CD4-positive, alpha-beta T cell (primary cell): ENCODE measurements at regions of chr14 and their contacts with region 1.

Region 1: GRCh38 chr14:92585981-92586937 is 72.7 kb downstream of the RIN3 start:
- DNase-seq: peak in 5 of 14 experiments; percentile 29 to 89 (median 74)
- ATAC-seq: peak; percentile 84
- H3K4me3 ChIP-seq: peak overlapping the region; percentile 8
- H3K4me3 Mint-ChIP-seq: peak overlapping the region; percentile 73
- H3K27ac ChIP-seq: peak overlapping the region; percentile 58 to 84
- H3K27ac Mint-ChIP-seq: peak overlapping the region; percentile 90
- H3K4me1 ChIP-seq: peaks cover 89% of the 10 kb centered on the region
- H3K4me1 Mint-ChIP-seq: peaks cover 96% of the 10 kb centered on the region
- H3K27me3 ChIP-seq: no peaks in the 10 kb centered on the region
- H3K27me3 Mint-ChIP-seq: no peaks in the 10 kb centered on the region
- CTCF ChIP-seq: no peak

Region 2: DNA sequence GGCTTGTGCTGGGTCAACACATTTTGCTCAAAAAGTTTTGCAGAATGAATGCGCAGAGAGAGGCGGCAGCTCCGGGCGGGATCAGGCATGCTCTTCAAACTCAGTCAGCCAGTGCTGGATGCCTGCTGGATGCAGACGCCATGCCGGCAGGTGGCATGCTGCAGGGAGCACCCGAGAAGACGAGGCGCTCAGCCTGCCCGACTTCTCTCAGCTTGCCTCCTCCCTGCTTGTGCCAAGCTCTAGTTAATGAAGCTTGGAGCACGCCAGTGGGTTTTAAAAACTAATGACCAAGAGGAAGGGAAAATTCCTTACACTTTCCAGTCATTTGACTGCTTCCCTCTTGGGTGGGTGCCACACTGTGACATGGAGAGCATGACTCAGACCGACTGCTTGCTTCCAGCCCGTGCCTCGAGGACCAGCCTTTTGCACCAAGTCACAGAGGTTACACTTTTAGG is 223.5 kb before region 1 on chr14:
- CTCF ChIA-PET with region 1: no interaction called
- POLR2A ChIA-PET with region 1: no interaction called
- intact Hi-C with region 1: no loop called
- DNase-seq: no peak
- ATAC-seq: no peak
- H3K4me3 ChIP-seq: no peak overlapping the region
- H3K4me3 Mint-ChIP-seq: no peak overlapping the region
- H3K27ac ChIP-seq: no peak overlapping the region
- H3K27ac Mint-ChIP-seq: no peak overlapping the region
- H3K4me1 ChIP-seq: no peaks in the 10 kb centered on the region
- H3K4me1 Mint-ChIP-seq: no peaks in the 10 kb centered on the region
- H3K27me3 ChIP-seq: peaks cover 0 to 7% of the 10 kb centered on the region in 2 experiments
- H3K27me3 Mint-ChIP-seq: peaks cover 22% of the 10 kb centered on the region
- CTCF ChIP-seq: no peak

Region 3: DNA sequence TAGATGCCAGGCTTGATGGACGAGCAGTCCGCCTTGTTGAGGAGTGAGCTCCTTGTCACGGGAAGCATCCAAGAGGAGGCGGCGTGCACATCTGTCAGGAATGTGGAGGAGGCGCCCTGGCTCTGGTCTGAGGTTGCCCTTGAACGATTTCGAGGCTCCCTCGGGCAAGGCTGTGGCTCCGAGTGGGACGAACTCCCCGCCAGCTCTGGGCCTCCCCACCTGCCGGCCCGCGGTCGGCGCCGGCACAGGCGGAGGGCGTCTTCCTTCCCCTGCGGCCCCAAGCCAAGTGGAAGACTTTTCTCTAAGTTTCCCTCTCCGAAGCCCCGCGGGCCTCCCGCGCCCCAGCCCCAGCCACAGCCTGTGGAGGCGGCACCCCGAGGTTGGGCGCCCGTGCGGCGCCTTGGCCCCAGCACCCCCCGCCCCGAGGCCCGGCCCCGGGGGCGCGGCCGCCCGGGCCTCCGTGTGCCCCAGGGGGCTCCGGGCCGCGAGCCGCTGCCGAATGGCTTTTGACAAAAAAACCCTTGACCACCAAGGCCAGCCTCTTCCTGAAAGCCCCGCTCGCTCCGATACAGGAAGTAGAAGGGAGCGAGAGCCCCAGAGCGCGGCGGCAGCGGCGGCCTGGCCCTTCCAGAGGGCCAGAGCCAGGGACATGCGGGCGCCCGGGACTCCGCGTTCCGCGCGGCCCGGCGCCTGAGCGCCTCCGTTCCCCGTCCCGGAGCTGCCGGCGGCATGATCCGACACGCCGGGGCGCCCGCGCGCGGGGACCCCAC is 72.9 kb before region 1 on chr14 and contains the start of gene RIN3:
- CTCF ChIA-PET with region 1: no interaction called
- POLR2A ChIA-PET with region 1: no interaction called
- intact Hi-C with region 1: loop called in 1 of 2 experiments (anchors 5 kb)
- DNase-seq: peak in 11 of 14 experiments; percentile 19 to 69 (median 29)
- ATAC-seq: peak; percentile 57
- H3K4me3 ChIP-seq: peak within 1 kb of the TSS; percentile 82
- H3K4me3 Mint-ChIP-seq: peak within 1 kb of the TSS; percentile 78
- H3K27ac ChIP-seq: peak within 1 kb of the TSS in 1 of 2 donors; percentile 21
- H3K27ac Mint-ChIP-seq: peak within 1 kb of the TSS; percentile 2
- H3K4me1 ChIP-seq: peaks cover 50% of the 10 kb centered on the region
- H3K4me1 Mint-ChIP-seq: peaks cover 41% of the 10 kb centered on the region
- H3K27me3 ChIP-seq: no peaks in the 10 kb centered on the region
- H3K27me3 Mint-ChIP-seq: no peaks in the 10 kb centered on the region
- CTCF ChIP-seq: no peak
- total RNA-seq, gene RIN3: 67.9 to 72.2 TPM

Region 4: GRCh38 chr14:92540472-92541053 is 45.7 kb before region 1 on chr14:
- CTCF ChIA-PET with region 1: no interaction called
- POLR2A ChIA-PET with region 1: interaction called, 28 read pairs
- intact Hi-C with region 1: loop called in 1 of 2 experiments (anchors 5 kb)
- DNase-seq: no peak
- ATAC-seq: no peak
- H3K4me3 ChIP-seq: no peak overlapping the region
- H3K4me3 Mint-ChIP-seq: peak overlapping the region; percentile 35
- H3K27ac ChIP-seq: no peak overlapping the region
- H3K27ac Mint-ChIP-seq: peak overlapping the region; percentile 50
- H3K4me1 ChIP-seq: peaks cover 34% of the 10 kb centered on the region
- H3K4me1 Mint-ChIP-seq: peaks cover 59% of the 10 kb centered on the region
- H3K27me3 ChIP-seq: no peaks in the 10 kb centered on the region
- H3K27me3 Mint-ChIP-seq: no peaks in the 10 kb centered on the region
- CTCF ChIP-seq: no peak

Region 5: DNA sequence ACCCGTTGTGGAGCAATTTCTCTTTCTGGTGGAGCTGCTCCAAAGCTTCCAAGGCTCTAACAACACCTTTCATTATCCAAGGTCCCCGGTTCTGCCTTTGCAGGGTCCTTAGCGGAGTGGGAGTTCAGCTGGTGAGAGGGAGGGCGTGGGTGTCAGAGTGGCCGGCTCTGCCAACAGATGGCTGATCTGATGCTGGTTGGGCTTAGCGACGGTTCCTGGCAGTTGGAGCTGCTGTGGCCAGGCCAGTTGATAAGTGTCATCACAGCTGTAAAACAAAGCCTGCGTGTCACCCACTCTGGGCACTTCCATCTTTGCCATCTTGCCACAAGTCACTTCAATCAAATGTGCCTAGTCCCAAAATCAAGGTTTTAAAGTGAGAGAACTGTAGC is 36.4 kb before region 1 on chr14:
- CTCF ChIA-PET with region 1: interaction called, 4 read pairs
- POLR2A ChIA-PET with region 1: interaction called, 28 read pairs
- intact Hi-C with region 1: loop called in 1 of 2 experiments (anchors 2 kb)
- DNase-seq: no peak
- ATAC-seq: no peak
- H3K4me3 ChIP-seq: no peak overlapping the region
- H3K4me3 Mint-ChIP-seq: no peak overlapping the region
- H3K27ac ChIP-seq: no peak overlapping the region
- H3K27ac Mint-ChIP-seq: no peak overlapping the region
- H3K4me1 ChIP-seq: peaks cover 13% of the 10 kb centered on the region
- H3K4me1 Mint-ChIP-seq: peaks cover 35% of the 10 kb centered on the region
- H3K27me3 ChIP-seq: no peaks in the 10 kb centered on the region
- H3K27me3 Mint-ChIP-seq: no peaks in the 10 kb centered on the region
- CTCF ChIP-seq: no peak

Region 6: DNA sequence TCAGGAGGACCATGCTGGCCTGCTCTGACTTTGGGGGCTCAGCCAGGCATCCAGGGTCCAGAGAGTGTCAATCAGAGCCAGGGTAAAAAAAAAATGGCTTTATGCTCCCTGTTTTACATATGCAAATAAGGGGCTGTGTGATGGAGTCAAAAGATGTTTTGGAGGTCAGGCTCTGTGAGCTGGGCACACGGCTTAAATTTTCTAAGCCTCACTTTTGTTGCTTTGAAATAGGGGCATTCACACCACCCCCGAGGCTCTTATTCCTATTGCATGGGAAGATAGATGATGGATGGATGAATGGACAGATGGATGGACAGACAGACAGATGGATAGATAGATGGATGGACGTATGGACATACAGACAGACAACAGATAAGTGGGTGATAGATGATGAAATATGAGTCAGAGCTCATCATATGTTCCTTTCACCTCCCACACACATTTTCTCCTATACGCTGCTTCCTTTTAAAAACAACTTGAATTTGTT is 30.0 kb before region 1 on chr14:
- CTCF ChIA-PET with region 1: interaction called, 5 read pairs
- POLR2A ChIA-PET with region 1: interaction called, 12 read pairs
- intact Hi-C with region 1: no loop called
- DNase-seq: no peak
- ATAC-seq: peak; percentile 15
- H3K4me3 ChIP-seq: no peak overlapping the region
- H3K4me3 Mint-ChIP-seq: peak overlapping the region; percentile 32
- H3K27ac ChIP-seq: no peak overlapping the region
- H3K27ac Mint-ChIP-seq: peak overlapping the region; percentile 67
- H3K4me1 ChIP-seq: peaks cover 40% of the 10 kb centered on the region
- H3K4me1 Mint-ChIP-seq: peaks cover 52% of the 10 kb centered on the region
- H3K27me3 ChIP-seq: no peaks in the 10 kb centered on the region
- H3K27me3 Mint-ChIP-seq: no peaks in the 10 kb centered on the region
- CTCF ChIP-seq: no peak

Region 7: DNA sequence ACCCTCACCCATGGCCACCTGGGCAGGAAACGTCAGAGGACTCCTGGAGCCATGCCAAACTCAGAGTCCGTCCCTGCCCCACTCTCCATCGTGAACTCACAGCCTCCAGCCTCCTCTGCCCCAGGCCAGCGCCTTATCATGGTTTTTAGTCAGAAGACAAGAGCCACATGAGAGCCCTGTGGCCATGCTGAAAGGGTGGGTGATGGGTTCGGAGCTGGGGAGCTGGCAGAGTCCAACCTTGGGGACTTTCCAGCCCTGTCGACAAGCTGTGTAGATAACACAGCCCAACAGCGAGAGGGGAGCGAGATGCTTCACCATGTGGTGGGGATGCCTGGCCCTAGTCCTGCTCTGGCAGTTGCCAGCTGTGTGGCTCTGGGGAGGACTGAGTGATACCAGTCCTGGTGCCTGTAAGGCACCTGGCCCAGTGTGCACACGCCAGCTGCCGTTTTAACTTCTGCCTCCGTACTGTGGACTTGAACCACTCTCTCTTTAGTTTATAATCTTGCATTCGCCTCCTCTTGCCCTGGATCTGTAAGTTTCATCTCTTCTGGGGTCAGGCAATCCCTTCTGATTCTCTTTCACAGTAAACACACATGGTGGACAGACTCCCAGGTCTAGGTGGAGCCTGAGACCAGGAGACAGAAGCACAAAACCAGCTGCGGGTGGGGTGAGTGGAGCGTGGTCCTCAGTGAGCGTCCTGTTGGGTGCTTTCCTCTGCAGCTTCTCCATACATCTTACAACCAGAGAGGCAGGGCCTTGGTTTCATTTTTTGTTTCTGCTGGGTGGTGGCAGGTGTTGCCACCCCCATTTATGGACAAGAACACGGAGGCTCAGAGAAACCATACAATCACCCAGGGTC is 17.4 kb before region 1 on chr14:
- CTCF ChIA-PET with region 1: no interaction called
- POLR2A ChIA-PET with region 1: interaction called, 10 read pairs
- intact Hi-C with region 1: no loop called
- DNase-seq: peak in 3 of 14 experiments; percentile 61 to 76 (median 61)
- ATAC-seq: peak; percentile 68
- H3K4me3 ChIP-seq: no peak overlapping the region
- H3K4me3 Mint-ChIP-seq: peak overlapping the region; percentile 63
- H3K27ac ChIP-seq: peak overlapping the region; percentile 39 to 48
- H3K27ac Mint-ChIP-seq: peak overlapping the region; percentile 80
- H3K4me1 ChIP-seq: peaks cover 18% of the 10 kb centered on the region
- H3K4me1 Mint-ChIP-seq: peaks cover 33% of the 10 kb centered on the region
- H3K27me3 ChIP-seq: no peaks in the 10 kb centered on the region
- H3K27me3 Mint-ChIP-seq: no peaks in the 10 kb centered on the region
- CTCF ChIP-seq: no peak